MCF 10A (cell line): ENCODE measurements at regions of chr6 and their contacts with region 1.

Region 1: DNA sequence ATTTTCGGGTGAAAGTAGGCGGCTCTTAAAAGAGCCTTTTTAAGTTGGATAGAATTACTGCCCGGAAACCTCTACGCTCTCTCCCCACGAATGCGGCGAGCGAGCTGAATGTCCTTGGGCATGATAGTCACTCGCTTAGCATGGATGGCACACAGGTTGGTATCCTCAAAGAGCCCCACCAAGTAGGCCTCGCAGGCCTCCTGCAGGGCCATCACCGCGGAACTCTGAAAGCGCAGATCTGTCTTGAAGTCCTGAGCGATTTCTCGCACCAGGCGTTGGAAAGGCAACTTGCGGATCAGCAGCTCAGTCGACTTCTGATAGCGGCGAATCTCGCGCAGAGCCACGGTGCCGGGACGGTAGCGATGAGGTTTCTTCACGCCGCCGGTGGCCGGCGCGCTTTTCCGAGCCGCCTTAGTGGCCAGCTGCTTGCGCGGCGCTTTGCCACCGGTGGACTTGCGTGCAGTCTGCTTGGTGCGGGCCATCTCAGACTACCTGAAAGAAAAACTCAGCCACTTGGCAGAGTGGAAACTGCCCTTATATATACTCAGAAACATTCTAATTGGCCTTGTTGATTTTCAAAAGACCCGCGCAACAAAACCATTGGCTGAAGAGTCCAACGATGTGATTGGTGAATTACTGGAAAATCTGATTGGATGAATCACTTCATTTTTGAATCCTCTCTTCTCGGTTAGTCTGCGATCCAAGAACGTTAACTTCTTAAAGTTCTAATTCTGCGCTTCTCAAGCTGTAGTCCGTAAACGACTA is 93.9 kb upstream of the BTN3A2 start:
- DNase-seq: peak; percentile 97
- H3K4me3 Mint-ChIP-seq: no peak overlapping the region
- H3K27ac Mint-ChIP-seq: peak overlapping the region; percentile 54
- H3K4me1 Mint-ChIP-seq: peaks cover 6% of the 10 kb centered on the region
- H3K27me3 Mint-ChIP-seq: no peaks in the 10 kb centered on the region
- CTCF ChIP-seq: no peak

Region 2: GRCh38 chr6:26031595-26032339 is 239.3 kb before region 1 on chr6:
- CTCF ChIA-PET with region 1: no interaction called
- POLR2A ChIA-PET with region 1: interaction called, 42 read pairs
- intact Hi-C with region 1: no loop called
- DNase-seq: peak; percentile 99
- H3K4me3 Mint-ChIP-seq: peak overlapping the region; percentile 81
- H3K27ac Mint-ChIP-seq: peak overlapping the region; percentile 97
- H3K4me1 Mint-ChIP-seq: peaks cover 25% of the 10 kb centered on the region
- H3K27me3 Mint-ChIP-seq: no peaks in the 10 kb centered on the region
- CTCF ChIP-seq: peak; percentile 12

Region 3: DNA sequence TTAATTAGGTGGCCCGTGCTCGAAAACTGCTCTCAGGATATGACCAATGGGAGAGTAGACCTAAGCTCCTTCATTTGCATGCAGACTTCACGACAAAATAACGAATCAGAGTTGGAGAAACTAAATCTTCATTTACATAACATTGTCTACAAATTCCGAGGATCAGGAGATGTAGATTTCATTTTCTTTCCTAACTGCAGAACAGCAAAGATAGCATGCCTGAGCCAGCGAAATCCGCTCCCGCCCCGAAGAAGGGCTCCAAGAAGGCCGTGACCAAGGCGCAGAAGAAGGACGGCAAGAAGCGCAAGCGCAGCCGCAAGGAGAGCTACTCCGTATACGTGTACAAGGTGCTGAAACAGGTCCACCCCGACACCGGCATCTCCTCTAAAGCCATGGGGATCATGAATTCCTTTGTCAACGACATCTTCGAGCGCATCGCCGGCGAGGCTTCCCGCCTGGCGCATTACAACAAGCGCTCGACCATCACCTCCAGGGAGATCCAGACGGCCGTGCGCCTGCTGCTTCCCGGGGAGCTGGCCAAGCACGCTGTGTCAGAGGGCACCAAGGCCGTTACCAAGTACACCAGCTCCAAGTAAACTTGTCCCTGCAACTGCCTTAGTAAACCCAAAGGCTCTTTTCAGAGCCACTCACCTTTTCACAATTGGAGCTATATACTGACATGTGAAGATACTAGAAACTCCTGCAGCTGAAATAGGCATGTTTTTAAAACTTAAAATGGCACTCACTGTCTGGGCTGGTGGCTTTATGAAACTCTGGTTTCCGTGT is 87.3 kb before region 1 on chr6:
- CTCF ChIA-PET with region 1: no interaction called
- POLR2A ChIA-PET with region 1: interaction called, 52 read pairs
- intact Hi-C with region 1: no loop called
- DNase-seq: peak; percentile 56
- H3K4me3 Mint-ChIP-seq: peak overlapping the region; percentile 79
- H3K27ac Mint-ChIP-seq: peak overlapping the region; percentile 84
- H3K4me1 Mint-ChIP-seq: peaks cover 27% of the 10 kb centered on the region
- H3K27me3 Mint-ChIP-seq: no peaks in the 10 kb centered on the region
- CTCF ChIP-seq: no peak

Region 4: DNA sequence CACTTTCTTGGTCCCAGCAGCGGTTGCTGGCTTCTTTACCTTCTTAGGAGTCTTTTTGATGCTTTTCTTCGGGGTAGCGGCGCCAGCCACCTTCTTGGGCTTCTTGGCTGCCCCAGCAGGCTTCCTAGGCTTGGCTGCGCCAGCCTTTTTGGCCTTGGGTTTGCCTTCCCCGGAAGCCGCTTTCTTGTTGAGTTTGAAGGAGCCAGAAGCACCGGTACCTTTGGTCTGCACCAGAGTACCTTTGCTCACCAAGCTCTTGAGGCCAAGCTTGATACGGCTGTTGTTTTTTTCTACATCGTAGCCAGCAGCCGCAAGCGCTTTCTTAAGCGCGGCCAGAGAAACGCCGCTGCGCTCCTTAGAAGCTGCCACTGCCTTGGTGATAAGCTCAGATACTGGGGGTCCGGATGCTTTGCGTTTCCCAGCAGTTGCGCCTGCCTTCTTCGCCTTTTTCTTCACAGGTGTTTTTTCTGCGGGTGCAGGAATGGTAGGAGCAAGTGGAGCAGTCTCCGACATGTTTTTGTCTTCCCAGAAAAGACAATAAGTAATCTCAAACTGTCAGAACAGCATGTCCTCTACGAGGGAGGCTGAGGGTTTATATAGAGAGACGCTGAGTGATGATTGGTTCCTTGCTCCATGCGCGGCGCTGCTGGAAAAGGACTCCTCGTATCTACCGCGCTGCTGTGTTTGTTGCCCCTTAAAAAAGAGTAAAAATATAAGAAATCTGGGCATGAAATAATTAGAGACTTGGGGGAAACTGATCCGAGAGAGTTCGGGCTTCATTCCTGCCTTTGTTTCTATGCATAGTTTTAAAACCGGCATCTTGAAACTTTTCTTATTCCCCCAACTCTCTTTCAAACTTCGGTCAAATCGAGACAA is 36.4 kb before region 1 on chr6:
- CTCF ChIA-PET with region 1: interaction called, 6 read pairs
- POLR2A ChIA-PET with region 1: interaction called, 197 read pairs
- intact Hi-C with region 1: no loop called
- DNase-seq: peak; percentile 90
- H3K4me3 Mint-ChIP-seq: peak overlapping the region; percentile 82
- H3K27ac Mint-ChIP-seq: peak overlapping the region; percentile 85
- H3K4me1 Mint-ChIP-seq: peaks cover 32% of the 10 kb centered on the region
- H3K27me3 Mint-ChIP-seq: no peaks in the 10 kb centered on the region
- CTCF ChIP-seq: no peak

Region 5: GRCh38 chr6:26285143-26286134 is 14.4 kb after region 1 on chr6:
- CTCF ChIA-PET with region 1: interaction called, 4 read pairs
- POLR2A ChIA-PET with region 1: interaction called, 353 read pairs
- intact Hi-C with region 1: loop called (anchors 1 kb)
- DNase-seq: peak; percentile 100
- H3K4me3 Mint-ChIP-seq: peak overlapping the region; percentile 91
- H3K27ac Mint-ChIP-seq: peak overlapping the region; percentile 92
- H3K4me1 Mint-ChIP-seq: peaks cover 10% of the 10 kb centered on the region
- H3K27me3 Mint-ChIP-seq: no peaks in the 10 kb centered on the region
- CTCF ChIP-seq: no peak

Region 6: GRCh38 chr6:27146706-27147505 is 875.8 kb after region 1 on chr6:
- CTCF ChIA-PET with region 1: no interaction called
- POLR2A ChIA-PET with region 1: interaction called, 29 read pairs
- intact Hi-C with region 1: no loop called
- DNase-seq: peak; percentile 99
- H3K4me3 Mint-ChIP-seq: no peak overlapping the region
- H3K27ac Mint-ChIP-seq: no peak overlapping the region
- H3K4me1 Mint-ChIP-seq: no peaks in the 10 kb centered on the region
- H3K27me3 Mint-ChIP-seq: no peaks in the 10 kb centered on the region
- CTCF ChIP-seq: no peak

Region 7: GRCh38 chr6:27893059-27893835 is 1622.2 kb after region 1 on chr6:
- CTCF ChIA-PET with region 1: no interaction called
- POLR2A ChIA-PET with region 1: interaction called, 12 read pairs
- intact Hi-C with region 1: no loop called
- DNase-seq: peak; percentile 98
- H3K4me3 Mint-ChIP-seq: no peak overlapping the region
- H3K27ac Mint-ChIP-seq: no peak overlapping the region
- H3K4me1 Mint-ChIP-seq: peaks cover 12% of the 10 kb centered on the region
- H3K27me3 Mint-ChIP-seq: no peaks in the 10 kb centered on the region
- CTCF ChIP-seq: no peak